Aorta (tissue), 5 donors: ENCODE measurements at regions of chr4 and their contacts with region 1.

Region 1: GRCh38 chr4:98068495-98068894 is 74.8 kb downstream of the STPG2 start:
- DNase-seq: no peak
- ATAC-seq: no peak
- H3K4me3 ChIP-seq: no peak overlapping the region
- H3K27ac ChIP-seq: no peak overlapping the region
- H3K4me1 ChIP-seq: no peaks in the 10 kb centered on the region
- H3K27me3 ChIP-seq: no peaks in the 10 kb centered on the region

Region 2: GRCh38 chr4:98006814-98007412 is 61.6 kb before region 1 on chr4:
- intact Hi-C with region 1: loop called in 1 of 2 experiments (anchors 10 kb)
- DNase-seq: no peak
- ATAC-seq: no peak
- H3K4me3 ChIP-seq: no peak overlapping the region
- H3K27ac ChIP-seq: no peak overlapping the region
- H3K4me1 ChIP-seq: no peaks in the 10 kb centered on the region
- H3K27me3 ChIP-seq: no peaks in the 10 kb centered on the region